Calu3 (cell line): ENCODE measurements at regions of chr1 and their contacts with region 1.

Region 1: DNA sequence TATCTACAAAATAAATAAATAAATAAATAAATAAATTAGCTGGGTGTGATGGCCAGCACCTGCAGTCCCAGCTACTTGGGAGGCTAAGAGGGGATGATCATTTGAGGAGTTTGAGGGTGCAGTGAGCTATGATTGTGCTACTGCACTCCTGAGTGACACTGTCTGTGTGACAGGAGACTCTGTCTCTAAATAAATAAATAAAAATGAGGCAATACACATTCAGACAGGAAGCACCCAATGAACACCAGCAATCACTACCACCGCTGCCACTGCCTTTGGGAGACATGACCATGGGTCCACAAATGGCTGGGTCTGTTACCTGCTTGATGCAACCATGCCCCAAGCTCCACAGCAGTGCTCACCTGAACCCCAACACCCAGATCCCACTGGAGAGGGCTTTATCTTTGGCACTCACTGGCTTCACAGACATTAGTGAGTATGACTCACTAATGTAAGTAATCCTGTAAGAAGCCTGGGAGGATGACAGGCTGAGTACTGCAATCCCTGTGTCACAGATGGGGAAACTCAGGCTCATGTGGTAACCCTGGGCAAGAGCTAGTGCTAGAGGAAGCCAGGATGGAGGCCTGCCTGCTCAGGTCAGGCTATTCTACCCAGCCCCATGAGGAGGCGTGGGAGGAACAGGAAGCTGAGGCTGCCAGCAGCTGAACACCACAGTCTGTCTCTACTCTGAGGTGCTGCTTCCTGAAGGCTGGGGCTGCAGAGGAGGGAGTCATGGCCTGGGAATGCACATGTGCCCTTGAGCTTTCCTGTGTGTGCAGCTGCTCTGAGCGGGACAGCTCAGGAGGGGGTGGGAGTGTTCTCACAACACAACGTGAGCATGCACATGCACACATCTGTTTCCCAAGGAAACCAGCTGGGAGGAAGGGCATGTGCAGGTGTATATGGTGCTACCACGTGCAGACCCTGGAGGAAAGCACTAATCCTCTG is 43.0 kb downstream of the SLC9A1 start:
- DNase-seq: peak; percentile 78
- H3K4me3 Mint-ChIP-seq: no peak overlapping the region
- H3K27ac Mint-ChIP-seq: peak overlapping the region; percentile 56
- H3K4me1 Mint-ChIP-seq: peaks cover 7% of the 10 kb centered on the region
- H3K27me3 Mint-ChIP-seq: no peaks in the 10 kb centered on the region
- CTCF ChIP-seq: no peak

Region 2: DNA sequence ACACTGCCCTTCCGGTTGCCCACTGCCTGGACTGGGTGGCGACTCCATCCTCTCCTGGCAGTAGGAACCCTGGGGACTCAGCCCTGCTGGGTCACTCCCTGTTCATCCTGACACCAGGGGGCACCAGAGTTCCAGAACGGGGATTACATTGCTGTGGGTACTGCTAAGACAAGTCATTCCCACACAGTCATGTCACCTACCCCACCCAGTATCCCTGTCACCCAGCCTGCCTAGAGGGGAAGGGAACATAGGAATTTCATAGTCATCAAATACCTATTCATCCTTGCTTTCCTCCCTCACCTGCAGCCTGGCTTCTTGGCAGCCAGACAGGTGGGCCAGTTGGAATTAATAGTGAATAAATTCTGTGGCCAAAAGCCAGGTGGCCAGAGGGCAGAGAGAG is 258.7 kb before region 1 on chr1:
- CTCF ChIA-PET with region 1: no interaction called
- intact Hi-C with region 1: no loop called
- DNase-seq: peak; percentile 93
- H3K4me3 Mint-ChIP-seq: no peak overlapping the region
- H3K27ac Mint-ChIP-seq: no peak overlapping the region
- H3K4me1 Mint-ChIP-seq: peaks cover 17% of the 10 kb centered on the region
- H3K27me3 Mint-ChIP-seq: no peaks in the 10 kb centered on the region
- CTCF ChIP-seq: peak; percentile 70

Region 3: GRCh38 chr1:27154991-27155781 is 43.3 kb after region 1 on chr1 and contains the start of gene SLC9A1:
- CTCF ChIA-PET with region 1: interaction called, 16 read pairs
- intact Hi-C with region 1: no loop called
- DNase-seq: peak; percentile 85
- H3K4me3 Mint-ChIP-seq: peak within 1 kb of the TSS; percentile 90
- H3K27ac Mint-ChIP-seq: peak within 1 kb of the TSS; percentile 96
- H3K4me1 Mint-ChIP-seq: peaks cover 42% of the 10 kb centered on the region
- H3K27me3 Mint-ChIP-seq: no peaks in the 10 kb centered on the region
- CTCF ChIP-seq: no peak
- total RNA-seq, gene SLC9A1: 16.4 and 17.4 TPM in 2 replicates

Region 4: GRCh38 chr1:27203946-27204345 is 92.0 kb after region 1 on chr1:
- CTCF ChIA-PET with region 1: no interaction called
- intact Hi-C with region 1: loop called (anchors 2 kb)
- DNase-seq: no peak
- H3K4me3 Mint-ChIP-seq: no peak overlapping the region
- H3K27ac Mint-ChIP-seq: no peak overlapping the region
- H3K4me1 Mint-ChIP-seq: no peaks in the 10 kb centered on the region
- H3K27me3 Mint-ChIP-seq: peaks cover 12% of the 10 kb centered on the region
- CTCF ChIP-seq: no peak